ENCODE measurements at regions of chr19 and their contacts with region 1.

Region 1: DNA sequence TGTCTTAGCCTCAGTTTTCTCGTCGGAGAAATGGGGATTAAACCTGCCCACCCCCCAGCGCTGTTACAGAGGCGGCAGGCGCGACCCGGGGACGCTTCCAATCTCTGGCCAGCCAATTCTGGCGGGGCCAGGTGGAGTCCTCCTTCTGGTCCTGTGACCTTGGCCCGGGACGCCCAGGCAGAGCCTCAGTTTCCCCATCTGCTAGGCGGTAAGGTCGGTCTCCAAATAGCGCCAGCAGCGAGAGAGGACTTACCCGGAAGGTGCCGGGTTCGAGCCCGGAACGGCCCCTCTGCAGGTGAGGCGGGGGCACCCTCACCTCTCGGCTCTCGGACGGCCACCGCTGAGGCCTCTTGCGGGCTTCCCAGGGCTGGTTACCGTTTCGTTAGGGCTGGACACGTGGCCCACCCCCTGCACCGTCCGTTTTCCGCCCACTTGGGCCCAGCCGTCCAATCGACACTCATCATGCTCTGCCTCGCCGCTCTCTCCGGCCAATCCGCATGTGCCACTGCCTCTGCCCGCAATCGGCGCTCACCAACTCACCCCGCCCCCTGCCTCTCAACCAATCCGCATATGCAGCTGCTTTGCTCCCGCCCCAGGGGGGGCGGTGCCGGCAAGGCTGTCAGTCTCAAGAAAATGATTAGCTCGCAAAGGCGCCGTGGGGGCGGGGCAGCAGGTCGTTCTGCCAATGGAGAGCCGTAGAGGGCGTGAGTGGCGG is at the start of gene ISOC2:
- DNase-seq: peak; percentile 100
- ATAC-seq: peak; percentile 95
- H3K4me3 ChIP-seq: peak within 1 kb of the TSS; percentile 65
- H3K27ac ChIP-seq: peak within 1 kb of the TSS; percentile 66
- H3K4me1 ChIP-seq: peaks cover 3% of the 10 kb centered on the region; the same call in 1 of the 2 replicates
- H3K27me3 ChIP-seq: no peaks in the 10 kb centered on the region
- CTCF ChIP-seq: no peak
- POLR2A ChIP-seq: peak; percentile 90
- RAD21 ChIP-seq: no peak
- total RNA-seq, gene ISOC2: 46.7 and 56.1 TPM in 2 replicates

Region 2: GRCh38 chr19:55605207-55605636 is 143.8 kb after region 1 on chr19:
- CTCF ChIA-PET with region 1: no interaction called
- POLR2A ChIA-PET with region 1: no interaction called
- dilution Hi-C with region 1: no loop called
- in situ Hi-C with region 1: no loop called
- intact Hi-C with region 1: loop called (anchors 2 kb)
- DNase-seq: peak; percentile 96
- ATAC-seq: peak; percentile 81
- H3K4me3 ChIP-seq: peak overlapping the region; percentile 76
- H3K27ac ChIP-seq: peak overlapping the region; percentile 91
- H3K4me1 ChIP-seq: peaks cover 9% of the 10 kb centered on the region
- H3K27me3 ChIP-seq: no peaks in the 10 kb centered on the region
- CTCF ChIP-seq: no peak
- POLR2A ChIP-seq: peak; percentile 48
- RAD21 ChIP-seq: no peak

Measured in IMR-90 (cell line).